HEK293 (cell line): ENCODE measurements at regions of chr2 and their contacts with region 1.

Region 1: GRCh38 chr2:231687133-231687852 is 21.0 kb upstream of the PTMA start:
- H3K4me3 ChIP-seq: no peak overlapping the region
- H3K27ac ChIP-seq: peak overlapping the region; percentile 2; the same call in 1 of the 2 replicates
- H3K4me1 ChIP-seq: no peaks in the 10 kb centered on the region
- CTCF ChIP-seq: peak; percentile 95

Region 2: GRCh38 chr2:231701456-231702373 is 14.4 kb after region 1 on chr2:
- CTCF ChIA-PET with region 1: interaction called, 31 read pairs
- POLR2A ChIA-PET with region 1: interaction called, 41 read pairs
- H3K4me3 ChIP-seq: no peak overlapping the region
- H3K27ac ChIP-seq: peak overlapping the region; percentile 35; the same call in 1 of the 2 replicates
- H3K4me1 ChIP-seq: no peaks in the 10 kb centered on the region; the same call in 1 of the 2 replicates
- CTCF ChIP-seq: no peak